Calu3 (cell line): ENCODE measurements at regions of chr6 and their contacts with region 1.

Region 1: DNA sequence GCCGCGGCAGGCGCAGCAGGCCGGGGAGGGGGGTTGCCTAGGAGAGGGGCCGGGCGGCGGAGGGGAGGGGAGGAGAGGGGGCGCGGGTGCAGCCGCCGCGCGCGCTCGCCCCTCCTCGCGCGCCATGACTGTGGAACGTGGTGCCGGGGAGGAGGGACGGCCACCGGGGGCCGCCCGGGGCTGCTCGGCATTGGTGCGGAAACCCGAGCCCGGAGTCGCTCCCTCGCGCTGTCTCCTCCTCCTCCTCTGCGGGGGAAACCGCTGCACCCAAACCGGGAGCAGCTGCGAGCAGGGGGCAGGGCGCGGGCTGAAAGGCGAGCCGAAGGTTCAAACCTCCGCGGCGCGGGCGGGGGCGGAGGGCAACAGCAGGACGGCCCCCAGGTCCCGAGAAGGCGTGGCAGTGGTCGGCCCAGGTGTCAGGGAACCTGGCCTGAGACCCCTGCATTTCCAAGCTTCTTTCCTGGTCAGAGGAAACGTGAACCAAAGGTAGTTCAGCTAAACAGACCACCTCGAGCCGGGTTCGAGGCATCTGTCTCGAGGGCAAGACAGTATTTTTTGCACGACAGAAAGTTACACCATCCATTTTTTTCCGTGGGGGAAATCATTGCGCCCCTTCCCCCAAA is 1.4 kb upstream of the TRERF1 start:
- DNase-seq: peak; percentile 88
- H3K4me3 Mint-ChIP-seq: peak overlapping the region; percentile 98
- H3K27ac Mint-ChIP-seq: no peak overlapping the region
- H3K4me1 Mint-ChIP-seq: peaks cover 20% of the 10 kb centered on the region
- H3K27me3 Mint-ChIP-seq: peaks cover 32% of the 10 kb centered on the region
- CTCF ChIP-seq: no peak

Region 2: GRCh38 chr6:42251911-42252637 is 201.1 kb before region 1 on chr6:
- CTCF ChIA-PET with region 1: no interaction called
- intact Hi-C with region 1: loop called (anchors 10 kb)
- DNase-seq: peak; percentile 73
- H3K4me3 Mint-ChIP-seq: no peak overlapping the region
- H3K27ac Mint-ChIP-seq: no peak overlapping the region
- H3K4me1 Mint-ChIP-seq: peaks cover 20% of the 10 kb centered on the region
- H3K27me3 Mint-ChIP-seq: no peaks in the 10 kb centered on the region
- CTCF ChIP-seq: no peak

Region 3: GRCh38 chr6:42306439-42307140 is 146.6 kb before region 1 on chr6:
- CTCF ChIA-PET with region 1: no interaction called
- intact Hi-C with region 1: loop called (anchors 5 kb)
- DNase-seq: no peak
- H3K4me3 Mint-ChIP-seq: no peak overlapping the region
- H3K27ac Mint-ChIP-seq: peak overlapping the region; percentile 50
- H3K4me1 Mint-ChIP-seq: peaks cover 38% of the 10 kb centered on the region
- H3K27me3 Mint-ChIP-seq: no peaks in the 10 kb centered on the region
- CTCF ChIP-seq: no peak